Esophagus muscularis mucosa (tissue), 4 donors: ENCODE measurements at regions of chr14 and their contacts with region 1.

Region 1: DNA sequence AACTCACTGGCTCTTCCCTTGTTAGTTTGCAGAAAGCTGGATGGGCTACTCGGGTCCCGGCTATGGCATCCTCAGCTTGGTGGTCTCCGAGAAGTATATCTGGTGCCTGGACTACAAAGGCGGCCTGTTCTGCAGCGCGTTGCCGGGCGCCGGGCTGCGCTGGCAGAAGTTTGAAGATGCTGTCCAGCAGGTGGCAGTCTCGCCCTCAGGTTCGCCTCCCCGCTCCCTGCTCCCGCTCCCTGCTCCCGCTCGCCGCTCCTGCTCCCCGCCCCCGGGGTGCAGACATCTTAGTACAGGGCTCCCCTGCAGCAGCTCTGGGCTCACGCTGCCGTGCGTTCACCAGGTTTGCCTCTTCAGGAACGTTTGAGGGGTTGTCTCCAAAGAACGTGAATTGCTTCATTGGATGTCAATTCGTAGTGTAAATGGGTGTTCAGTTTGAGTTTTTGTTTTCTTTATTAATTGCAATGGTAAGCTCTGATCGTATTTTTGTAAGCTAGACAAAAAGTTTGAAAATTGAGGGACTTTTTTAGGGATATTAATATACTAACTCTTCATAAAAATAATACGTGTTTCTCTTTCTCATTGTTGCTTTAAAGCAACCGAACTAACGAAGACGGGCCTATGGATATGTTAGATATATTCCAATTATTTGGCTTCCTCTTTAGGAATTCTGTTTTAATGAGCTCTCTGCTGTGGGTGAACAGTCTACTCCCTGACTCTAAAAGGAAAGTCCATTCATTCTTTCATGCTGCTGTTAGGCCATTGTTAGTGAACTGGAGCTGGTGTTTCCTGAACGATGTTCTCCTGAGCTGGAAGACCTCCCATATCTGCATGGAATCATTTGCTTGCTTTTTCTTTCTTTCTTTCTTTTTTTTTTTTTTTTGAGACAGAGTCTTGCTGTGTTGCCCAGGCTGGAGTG is 71.3 kb downstream of the ANKRD9 start:
- DNase-seq: peak; percentile 96
- H3K4me3 ChIP-seq: peak overlapping the region; percentile 17 to 40 (median 32)
- H3K27ac ChIP-seq: peak overlapping the region in 3 of 4 donors; percentile 1 to 34 (median 24)
- H3K4me1 ChIP-seq: peaks cover 5 to 17% (median 15%) of the 10 kb centered on the region in 4 donors
- H3K27me3 ChIP-seq: no peaks in the 10 kb centered on the region
- CTCF ChIP-seq: peak; percentile 77 to 84 (median 84)
- EP300 ChIP-seq: no peak
- POLR2A ChIP-seq: no peak

Region 2: GRCh38 chr14:102516531-102517415 is 78.5 kb after region 1 on chr14:
- intact Hi-C with region 1: loop called (anchors 1 kb)
- DNase-seq: no peak
- H3K4me3 ChIP-seq: peak overlapping the region; percentile 75 to 95 (median 94)
- H3K27ac ChIP-seq: peak overlapping the region; percentile 67 to 87 (median 74)
- H3K4me1 ChIP-seq: peaks cover 6 to 14% (median 13%) of the 10 kb centered on the region in 4 donors
- H3K27me3 ChIP-seq: no peaks in the 10 kb centered on the region
- CTCF ChIP-seq: peak; percentile 96 to 99 (median 99)
- EP300 ChIP-seq: no peak
- POLR2A ChIP-seq: no peak

Region 3: DNA sequence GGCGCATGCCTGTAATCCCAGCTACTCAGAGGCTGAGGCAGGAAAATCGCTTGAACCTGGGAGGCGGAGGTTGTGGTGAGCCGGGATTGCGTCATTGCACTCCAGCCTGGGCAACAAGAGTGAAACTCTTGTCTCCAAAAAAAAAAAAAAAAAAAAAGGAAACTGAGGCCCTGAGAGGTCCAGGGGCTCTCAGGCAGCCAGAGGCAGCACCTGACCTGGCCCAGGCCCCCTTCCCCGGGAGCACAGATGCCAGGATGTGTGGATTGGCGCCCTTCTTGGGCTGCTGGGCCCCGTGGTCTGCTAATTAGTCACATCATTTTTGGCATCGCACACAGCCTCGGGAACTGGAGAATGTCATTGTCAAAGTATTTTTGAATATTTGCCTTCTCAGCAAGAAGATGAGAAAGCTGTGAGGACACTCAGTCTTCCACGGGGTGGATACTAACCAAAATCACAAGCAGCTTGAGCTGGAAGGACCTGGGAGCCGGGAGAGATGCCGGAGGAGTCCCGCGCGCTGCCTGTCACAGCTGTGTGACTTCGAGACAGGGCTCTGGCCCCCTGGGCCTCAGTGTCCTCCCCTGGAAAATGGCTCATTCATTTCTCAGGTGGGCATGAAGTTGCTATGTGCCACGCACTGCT is 141.6 kb after region 1 on chr14:
- intact Hi-C with region 1: loop called (anchors 10 kb)
- DNase-seq: no peak
- H3K4me3 ChIP-seq: no peak overlapping the region
- H3K27ac ChIP-seq: no peak overlapping the region
- H3K4me1 ChIP-seq: peaks cover 0 to 9% (median 7%) of the 10 kb centered on the region in 4 donors
- H3K27me3 ChIP-seq: peaks cover 0 to 2% (median 0%) of the 10 kb centered on the region in 4 donors
- CTCF ChIP-seq: no peak
- EP300 ChIP-seq: no peak
- POLR2A ChIP-seq: no peak